ENCODE measurements at regions of chr13 and their contacts with region 1.

Region 1: GRCh38 chr13:30673669-30674521 is 56.2 kb downstream of the USPL1 start:
- DNase-seq: peak; percentile 89 to 96
- H3K4me3 ChIP-seq: peak overlapping the region; percentile 55 to 57
- H3K27ac ChIP-seq: peak overlapping the region; percentile 80
- H3K4me1 ChIP-seq: peaks cover 0 to 7% (median 2%) of the 10 kb centered on the region in 4 donors
- H3K27me3 ChIP-seq: no peaks in the 10 kb centered on the region
- CTCF ChIP-seq: peak; percentile 70 to 74

Region 2: GRCh38 chr13:30593001-30593400 is 80.9 kb before region 1 on chr13:
- intact Hi-C with region 1: no loop called
- DNase-seq: no peak
- H3K4me3 ChIP-seq: no peak overlapping the region
- H3K27ac ChIP-seq: no peak overlapping the region
- H3K4me1 ChIP-seq: no peaks in the 10 kb centered on the region
- H3K27me3 ChIP-seq: no peaks in the 10 kb centered on the region
- CTCF ChIP-seq: no peak

Region 3: DNA sequence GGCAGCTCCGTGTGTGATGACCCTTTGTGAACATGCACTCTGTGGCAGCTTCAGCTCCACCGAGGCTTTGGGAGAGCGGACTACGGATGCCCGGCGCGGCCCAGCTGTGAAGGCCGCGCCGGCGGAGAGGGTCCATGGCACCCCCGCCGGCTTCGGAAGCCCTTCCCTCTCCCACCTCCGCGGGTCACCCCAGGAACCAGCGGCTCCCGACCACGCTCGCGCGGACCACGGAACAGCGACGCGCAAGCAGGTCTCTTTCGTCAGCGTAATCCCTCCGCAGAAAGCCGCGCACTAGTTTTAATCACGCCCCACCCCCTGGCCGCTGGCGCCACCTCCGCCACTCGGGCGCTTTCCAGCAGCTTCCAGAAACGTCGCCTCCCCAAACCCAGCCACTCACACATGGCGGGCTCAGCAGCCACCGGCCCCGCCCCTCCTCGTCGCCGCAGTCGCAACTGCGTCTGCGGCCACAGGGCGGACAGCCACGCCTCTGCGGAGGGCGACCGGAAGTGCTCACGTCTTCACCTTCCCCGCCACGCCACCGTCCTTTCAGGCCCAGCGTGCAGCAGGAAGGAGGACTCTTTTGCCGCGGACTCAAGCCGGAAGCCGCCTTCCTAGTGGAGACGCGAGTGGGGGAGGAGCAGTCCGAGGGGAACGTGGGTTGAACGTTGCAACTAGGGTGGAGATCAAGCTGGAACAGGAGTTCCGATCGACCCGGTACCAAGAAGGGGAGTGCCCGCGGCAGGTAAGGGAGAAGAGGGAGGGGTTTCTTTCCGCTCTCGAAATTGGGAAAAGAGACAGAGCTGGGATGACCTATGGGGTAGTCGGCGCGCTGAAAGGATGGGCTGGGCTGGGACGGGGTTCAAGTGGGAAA is 56.3 kb before region 1 on chr13 and contains the start of gene USPL1:
- intact Hi-C with region 1: loop called (anchors 10 kb)
- DNase-seq: peak; percentile 96 to 99
- H3K4me3 ChIP-seq: peak within 1 kb of the TSS; percentile 77 to 92
- H3K27ac ChIP-seq: peak within 1 kb of the TSS; percentile 99
- H3K4me1 ChIP-seq: peaks cover 5 to 49% (median 25%) of the 10 kb centered on the region in 4 donors
- H3K27me3 ChIP-seq: no peaks in the 10 kb centered on the region
- CTCF ChIP-seq: peak; percentile 38 to 63

Region 4: GRCh38 chr13:30654430-30654829 is 19.5 kb before region 1 on chr13:
- intact Hi-C with region 1: no loop called
- DNase-seq: no peak
- H3K4me3 ChIP-seq: no peak overlapping the region
- H3K27ac ChIP-seq: no peak overlapping the region
- H3K4me1 ChIP-seq: peaks cover 0 to under 1% (median 0%) of the 10 kb centered on the region in 4 donors
- H3K27me3 ChIP-seq: no peaks in the 10 kb centered on the region
- CTCF ChIP-seq: no peak

Region 5: GRCh38 chr13:30865123-30866049 is 191.5 kb after region 1 on chr13:
- intact Hi-C with region 1: loop called (anchors 2 kb)
- DNase-seq: peak; percentile 85 to 90
- H3K4me3 ChIP-seq: no peak overlapping the region
- H3K27ac ChIP-seq: peak overlapping the region; percentile 87 to 93
- H3K4me1 ChIP-seq: peaks cover 6 to 63% (median 57%) of the 10 kb centered on the region in 4 donors
- H3K27me3 ChIP-seq: no peaks in the 10 kb centered on the region
- CTCF ChIP-seq: peak; percentile 92 to 94

Region 6: GRCh38 chr13:31044377-31045285 is 370.7 kb after region 1 on chr13:
- intact Hi-C with region 1: loop called (anchors 5 kb)
- DNase-seq: peak; percentile 71 to 86
- H3K4me3 ChIP-seq: no peak overlapping the region
- H3K27ac ChIP-seq: peak overlapping the region in 1 of 2 donors; percentile 47
- H3K4me1 ChIP-seq: peaks cover 0 to 21% (median 14%) of the 10 kb centered on the region in 4 donors
- H3K27me3 ChIP-seq: peaks cover 0 to 2% of the 10 kb centered on the region in 2 donors
- CTCF ChIP-seq: peak; percentile 93 to 97

Measured in tibial artery (tissue), 4 donors.